Calu3 (cell line): ENCODE measurements at regions of chr7 and their contacts with region 1.

Region 1: GRCh38 chr7:81430150-81430549 is 339.7 kb downstream of the HGF start:
- DNase-seq: no peak
- H3K4me3 Mint-ChIP-seq: no peak overlapping the region
- H3K27ac Mint-ChIP-seq: no peak overlapping the region
- H3K4me1 Mint-ChIP-seq: no peaks in the 10 kb centered on the region
- H3K27me3 Mint-ChIP-seq: no peaks in the 10 kb centered on the region
- CTCF ChIP-seq: no peak

Region 2: DNA sequence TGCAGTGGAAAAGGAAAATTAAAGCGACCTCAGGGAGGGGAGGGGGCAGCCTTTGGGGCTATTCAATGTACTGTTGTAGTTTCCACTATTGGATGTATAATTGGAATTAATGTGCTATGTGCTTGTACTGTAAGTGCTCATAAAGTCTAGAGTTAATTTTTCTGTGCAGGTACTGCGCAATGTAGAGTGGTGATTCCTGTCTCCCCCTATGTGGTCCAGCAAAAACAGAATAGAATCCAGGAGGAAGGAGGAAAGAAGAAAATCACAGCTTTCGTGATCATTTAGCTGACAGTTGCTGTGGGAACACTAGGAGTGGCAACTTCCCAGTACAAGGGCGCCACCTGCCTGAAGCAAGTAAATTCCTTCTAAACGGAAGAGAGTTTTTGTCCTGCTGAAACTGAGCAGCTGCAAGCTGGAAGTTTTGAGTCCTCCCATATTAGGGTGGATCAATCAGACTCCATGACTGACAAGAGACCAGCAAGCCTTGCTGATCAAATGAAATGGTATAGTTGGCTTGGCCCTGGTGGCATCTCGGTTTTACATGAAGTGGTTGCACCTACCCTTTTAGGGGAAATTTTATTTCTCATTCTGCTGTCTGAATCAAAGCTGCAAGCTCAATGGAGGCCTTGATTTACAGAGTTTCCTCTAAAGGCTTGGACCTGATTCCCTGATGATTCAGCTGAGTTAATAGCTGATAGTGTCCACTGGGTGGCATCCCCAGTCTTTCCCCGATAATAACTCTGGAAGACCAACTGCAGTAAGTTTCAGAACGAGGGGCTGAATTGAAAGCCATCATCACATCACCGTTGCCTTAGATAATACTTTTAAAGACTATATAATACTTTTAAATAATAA is 39.9 kb after region 1 on chr7:
- CTCF ChIA-PET with region 1: interaction called, 12 read pairs
- intact Hi-C with region 1: no loop called
- DNase-seq: peak; percentile 66
- H3K4me3 Mint-ChIP-seq: no peak overlapping the region
- H3K27ac Mint-ChIP-seq: no peak overlapping the region
- H3K4me1 Mint-ChIP-seq: peaks cover 17% of the 10 kb centered on the region
- H3K27me3 Mint-ChIP-seq: no peaks in the 10 kb centered on the region
- CTCF ChIP-seq: peak; percentile 44